Gastrocnemius medialis (tissue), 4 donors: ENCODE measurements at regions of chr11 and their contacts with region 1.

Region 1: DNA sequence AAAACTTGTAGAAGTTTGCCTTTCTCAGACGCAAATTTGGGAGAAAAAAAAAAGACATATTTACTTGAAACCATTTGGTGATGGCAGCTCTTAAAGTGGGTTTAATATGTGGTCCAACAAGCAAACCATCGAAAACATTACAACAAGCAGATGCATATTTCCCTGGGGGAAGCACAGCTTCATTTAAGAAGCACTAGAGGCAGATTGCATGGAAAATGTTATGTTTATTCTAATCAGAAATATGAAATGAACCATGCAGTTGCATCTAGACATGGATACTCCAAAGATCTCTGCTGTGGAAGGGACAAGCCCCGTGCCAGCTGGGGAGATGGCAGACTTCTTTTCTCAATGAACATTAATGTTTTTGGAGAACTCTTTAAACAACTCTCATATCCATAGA is 57.4 kb upstream of the PARVA start:
- DNase-seq: no peak
- ATAC-seq: no peak
- H3K4me3 ChIP-seq: no peak overlapping the region
- H3K27ac ChIP-seq: no peak overlapping the region
- H3K4me1 ChIP-seq: no peaks in the 10 kb centered on the region
- H3K27me3 ChIP-seq: no peaks in the 10 kb centered on the region
- CTCF ChIP-seq: no peak
- POLR2A ChIP-seq: no peak

Region 2: GRCh38 chr11:12433571-12434324 is 113.8 kb after region 1 on chr11:
- in situ Hi-C with region 1: no loop called
- intact Hi-C with region 1: no loop called
- DNase-seq: no peak
- ATAC-seq: no peak
- H3K4me3 ChIP-seq: no peak overlapping the region
- H3K27ac ChIP-seq: peak overlapping the region; percentile 56 to 66 (median 63)
- H3K4me1 ChIP-seq: peaks cover 26 to 50% of the 10 kb centered on the region in 2 donors
- H3K27me3 ChIP-seq: no peaks in the 10 kb centered on the region
- CTCF ChIP-seq: no peak
- POLR2A ChIP-seq: no peak

Region 3: DNA sequence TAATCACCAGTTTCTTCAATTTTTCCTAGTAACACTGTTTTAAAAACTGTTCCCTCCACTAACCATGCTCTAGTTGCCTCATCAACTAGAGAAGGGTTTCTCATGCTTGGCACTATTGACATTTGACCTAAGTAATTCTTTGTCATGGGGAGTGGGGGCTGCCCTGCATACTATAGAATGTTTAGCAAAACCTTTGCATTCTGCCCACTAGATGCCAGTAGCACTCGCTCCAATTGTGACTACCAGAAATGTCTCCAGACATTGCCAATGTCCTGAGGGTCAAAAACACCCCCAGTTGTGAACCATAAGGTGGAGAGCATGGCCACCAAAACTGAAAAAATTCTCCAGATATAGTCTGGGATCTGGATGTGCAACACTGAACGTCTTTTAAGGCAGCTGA is 930.0 kb after region 1 on chr11:
- in situ Hi-C with region 1: no loop called
- intact Hi-C with region 1: loop called (anchors 10 kb)
- DNase-seq: no peak
- ATAC-seq: no peak
- H3K4me3 ChIP-seq: no peak overlapping the region
- H3K27ac ChIP-seq: no peak overlapping the region
- H3K4me1 ChIP-seq: no peaks in the 10 kb centered on the region
- H3K27me3 ChIP-seq: no peaks in the 10 kb centered on the region
- CTCF ChIP-seq: peak; percentile 12 to 39 (median 30)
- POLR2A ChIP-seq: no peak

Region 4: DNA sequence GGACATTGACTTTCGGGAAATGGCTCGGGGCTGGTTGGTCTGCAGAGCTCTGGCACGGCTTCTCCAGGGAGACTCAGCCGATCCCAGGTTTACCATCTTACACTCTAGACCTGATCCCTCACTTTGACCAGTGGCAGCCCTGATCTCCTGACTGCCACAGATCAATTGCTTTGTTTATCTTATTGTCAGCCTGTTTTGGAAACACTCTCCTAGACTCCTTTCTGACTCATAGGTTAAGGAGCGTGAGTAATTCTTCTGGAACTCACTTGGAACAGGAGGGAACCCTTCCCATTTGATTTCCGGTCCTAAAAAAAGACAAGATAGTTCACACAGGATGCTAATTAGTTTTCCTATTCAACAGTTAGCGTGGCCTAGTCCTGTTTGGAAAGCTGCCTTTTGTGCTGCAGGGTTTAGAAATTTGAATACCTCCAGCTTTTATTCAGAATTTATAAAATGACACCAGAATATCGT is 941.6 kb after region 1 on chr11:
- in situ Hi-C with region 1: no loop called
- intact Hi-C with region 1: no loop called
- DNase-seq: no peak
- ATAC-seq: peak; percentile 90 to 92
- H3K4me3 ChIP-seq: no peak overlapping the region
- H3K27ac ChIP-seq: peak overlapping the region; percentile 57 to 64 (median 62)
- H3K4me1 ChIP-seq: peaks cover 21% of the 10 kb centered on the region in 2 donors
- H3K27me3 ChIP-seq: no peaks in the 10 kb centered on the region
- CTCF ChIP-seq: no peak
- POLR2A ChIP-seq: no peak